Esophagus muscularis mucosa (tissue), 4 donors: ENCODE measurements at regions of chr2 and their contacts with region 1.

Region 1: GRCh38 chr2:182980115-182980514 is 58.1 kb downstream of the NCKAP1 start:
- DNase-seq: no peak
- H3K4me3 ChIP-seq: no peak overlapping the region
- H3K27ac ChIP-seq: no peak overlapping the region
- H3K4me1 ChIP-seq: peaks cover 0 to 11% (median 0%) of the 10 kb centered on the region in 4 donors
- H3K27me3 ChIP-seq: no peaks in the 10 kb centered on the region
- CTCF ChIP-seq: peak; percentile 51 to 63 (median 58)
- EP300 ChIP-seq: no peak
- POLR2A ChIP-seq: no peak

Region 2: DNA sequence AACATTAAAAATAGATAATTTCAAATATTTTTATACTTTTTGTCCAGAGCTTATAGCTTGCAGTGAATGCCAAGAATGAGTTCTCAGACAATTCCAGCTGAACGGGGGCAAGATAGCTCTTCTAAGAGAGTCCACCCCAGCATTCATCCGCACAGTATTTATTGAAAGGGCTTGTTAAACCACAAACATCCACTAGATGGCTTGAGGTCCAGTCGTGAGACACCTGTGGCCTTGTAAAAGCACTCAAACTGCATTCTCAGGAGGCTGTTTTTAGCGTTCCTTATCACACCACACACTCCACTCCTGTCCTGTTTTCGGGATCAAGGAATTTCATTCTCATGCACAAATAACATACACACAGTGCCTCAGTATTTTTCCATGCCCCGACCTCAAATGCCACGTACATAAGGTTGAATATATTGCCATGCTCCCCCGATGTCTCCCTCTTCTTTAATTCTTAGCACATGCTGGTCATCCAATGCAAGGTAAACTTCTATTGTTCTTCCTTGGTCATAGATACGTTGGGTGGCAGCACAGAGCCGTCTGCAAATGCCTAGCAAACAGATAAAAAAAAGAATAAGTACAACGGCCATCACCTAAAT is 216.7 kb before region 1 on chr2:
- intact Hi-C with region 1: loop called (anchors 5 kb)
- DNase-seq: no peak
- H3K4me3 ChIP-seq: no peak overlapping the region
- H3K27ac ChIP-seq: peak overlapping the region in 2 of 4 donors; percentile 56 to 65
- H3K4me1 ChIP-seq: peaks cover 0 to 24% (median 22%) of the 10 kb centered on the region in 4 donors
- H3K27me3 ChIP-seq: no peaks in the 10 kb centered on the region
- CTCF ChIP-seq: peak; percentile 51 to 77 (median 52)
- EP300 ChIP-seq: no peak
- POLR2A ChIP-seq: no peak

Region 3: DNA sequence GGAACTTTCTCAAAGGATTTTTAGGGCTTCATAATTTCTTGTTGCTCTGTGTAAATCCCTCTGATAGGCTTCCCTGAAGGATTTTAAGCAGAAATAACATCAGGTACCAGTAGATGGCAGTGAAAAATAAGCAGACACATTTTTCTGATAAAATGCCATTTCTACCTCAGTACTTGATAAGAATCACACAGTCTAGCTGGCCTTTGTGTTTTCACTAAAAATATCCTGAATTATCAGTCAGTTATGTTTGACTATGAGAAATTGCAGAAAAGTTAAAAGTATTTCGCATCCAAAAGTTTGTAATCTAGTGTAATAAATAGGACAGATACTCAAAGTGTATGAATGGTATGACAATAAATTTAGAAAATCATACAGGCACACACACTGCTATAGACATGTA is 195.3 kb before region 1 on chr2:
- intact Hi-C with region 1: loop called (anchors 5 kb)
- DNase-seq: no peak
- H3K4me3 ChIP-seq: no peak overlapping the region
- H3K27ac ChIP-seq: no peak overlapping the region
- H3K4me1 ChIP-seq: no peaks in the 10 kb centered on the region
- H3K27me3 ChIP-seq: no peaks in the 10 kb centered on the region
- CTCF ChIP-seq: peak; percentile 55 to 64 (median 56)
- EP300 ChIP-seq: no peak
- POLR2A ChIP-seq: no peak

Region 4: GRCh38 chr2:182818541-182819324 is 161.4 kb before region 1 on chr2:
- intact Hi-C with region 1: no loop called
- DNase-seq: no peak
- H3K4me3 ChIP-seq: no peak overlapping the region
- H3K27ac ChIP-seq: no peak overlapping the region
- H3K4me1 ChIP-seq: peaks cover 9 to 32% (median 29%) of the 10 kb centered on the region in 4 donors
- H3K27me3 ChIP-seq: no peaks in the 10 kb centered on the region
- CTCF ChIP-seq: no peak
- EP300 ChIP-seq: no peak
- POLR2A ChIP-seq: no peak

Region 5: DNA sequence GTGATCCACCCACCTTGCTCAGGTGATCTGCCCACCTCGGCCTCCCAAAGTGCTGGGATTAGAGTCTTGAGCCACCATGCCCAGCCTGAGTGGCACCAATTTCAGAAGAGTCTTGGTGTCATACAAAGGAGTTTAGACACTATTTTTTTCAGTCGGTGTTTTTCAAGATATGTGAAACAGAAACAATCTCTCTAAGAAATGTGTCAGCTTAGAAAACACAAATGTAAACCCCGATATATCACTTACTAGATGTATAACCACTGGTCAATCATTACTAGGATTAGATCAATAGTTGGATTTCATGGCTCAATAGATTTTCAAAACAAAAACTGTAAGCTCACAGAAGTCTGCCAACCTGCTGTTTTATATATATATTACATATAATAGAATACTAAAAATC is 46.5 kb before region 1 on chr2:
- intact Hi-C with region 1: loop called (anchors 10 kb)
- DNase-seq: no peak
- H3K4me3 ChIP-seq: no peak overlapping the region
- H3K27ac ChIP-seq: no peak overlapping the region
- H3K4me1 ChIP-seq: peaks cover 0 to 10% (median 0%) of the 10 kb centered on the region in 4 donors
- H3K27me3 ChIP-seq: no peaks in the 10 kb centered on the region
- CTCF ChIP-seq: no peak
- EP300 ChIP-seq: no peak
- POLR2A ChIP-seq: no peak

Region 6: GRCh38 chr2:183149489-183149888 is 169.4 kb after region 1 on chr2:
- intact Hi-C with region 1: no loop called
- DNase-seq: no peak
- H3K4me3 ChIP-seq: no peak overlapping the region
- H3K27ac ChIP-seq: no peak overlapping the region
- H3K4me1 ChIP-seq: peaks cover 0 to 11% (median 5%) of the 10 kb centered on the region in 4 donors
- H3K27me3 ChIP-seq: no peaks in the 10 kb centered on the region
- CTCF ChIP-seq: no peak
- EP300 ChIP-seq: no peak
- POLR2A ChIP-seq: no peak